Activated CD4-positive, alpha-beta memory T cell treated with anti-CD3 and anti-CD28 coated beads, Interleukin-2, amount 10 ng/mL, durations not matched to agents 7 days and 5 days (primary cell): ENCODE measurements at regions of chr20 and their contacts with region 1.

Region 1: DNA sequence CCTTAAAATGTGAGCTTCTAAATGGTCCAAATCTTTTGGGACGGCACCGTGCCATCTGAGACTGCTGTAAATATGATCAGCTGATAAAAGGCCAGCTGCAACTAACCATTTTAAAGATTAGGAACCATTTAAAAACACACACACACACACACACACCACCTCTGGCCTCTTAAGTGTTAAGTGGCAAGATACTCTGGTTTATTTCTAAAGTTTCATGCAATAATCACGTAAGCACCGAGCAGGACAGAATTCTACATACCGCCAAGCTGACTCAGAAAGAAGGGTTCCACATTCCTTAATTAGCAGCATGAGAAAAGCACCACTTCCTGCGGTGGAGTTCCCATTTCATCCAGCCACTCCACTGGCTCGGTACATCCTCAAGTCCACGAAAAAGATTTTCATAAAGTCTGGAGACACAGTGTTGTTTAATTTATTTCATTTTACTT is 17.8 kb upstream of the ZNF217 start:
- DNase-seq: no peak
- H3K4me3 Mint-ChIP-seq: no peak overlapping the region
- H3K27ac Mint-ChIP-seq: no peak overlapping the region
- H3K4me1 Mint-ChIP-seq: peaks cover 32% of the 10 kb centered on the region
- H3K27me3 Mint-ChIP-seq: no peaks in the 10 kb centered on the region

Region 2: DNA sequence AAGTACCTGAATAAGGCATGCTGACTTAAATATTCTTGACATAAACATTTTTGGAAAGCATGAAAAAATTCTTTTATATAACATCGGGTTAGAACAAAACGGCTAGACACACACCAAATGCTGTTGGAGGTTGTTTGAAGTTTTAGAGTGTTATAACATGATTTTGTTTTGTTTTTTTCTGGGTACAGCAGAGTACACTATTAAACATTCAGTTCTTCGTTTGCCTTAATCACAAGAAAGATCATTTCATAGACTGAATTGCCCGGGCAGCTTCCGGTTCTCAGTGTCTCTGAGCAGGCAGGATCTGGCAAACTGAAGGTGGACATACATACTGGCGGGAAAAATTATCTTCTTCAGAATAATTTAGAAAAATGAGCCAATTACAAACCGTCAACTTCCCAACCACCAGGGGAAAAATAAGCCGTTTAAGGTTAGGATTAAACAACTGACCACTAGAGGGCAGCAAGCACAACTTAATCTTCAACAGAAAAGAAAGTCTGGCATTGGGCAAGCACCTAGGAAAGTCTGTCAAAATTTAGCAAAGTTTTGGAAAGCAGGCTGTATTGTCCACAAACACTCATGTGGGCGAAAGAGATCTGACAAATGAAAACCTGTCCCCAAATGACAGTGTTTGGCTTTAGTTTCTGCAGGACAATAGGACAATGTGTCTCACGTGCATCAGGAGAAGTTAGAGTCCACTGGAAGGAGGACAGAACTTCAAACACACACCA is 32.8 kb before region 1 on chr20:
- CTCF ChIA-PET with region 1: interaction called, 5 read pairs
- POLR2A ChIA-PET with region 1: interaction called, 12 read pairs
- DNase-seq: peak; percentile 55
- H3K4me3 Mint-ChIP-seq: peak overlapping the region; percentile 78
- H3K27ac Mint-ChIP-seq: peak overlapping the region; percentile 80
- H3K4me1 Mint-ChIP-seq: peaks cover 92% of the 10 kb centered on the region
- H3K27me3 Mint-ChIP-seq: no peaks in the 10 kb centered on the region

Region 3: DNA sequence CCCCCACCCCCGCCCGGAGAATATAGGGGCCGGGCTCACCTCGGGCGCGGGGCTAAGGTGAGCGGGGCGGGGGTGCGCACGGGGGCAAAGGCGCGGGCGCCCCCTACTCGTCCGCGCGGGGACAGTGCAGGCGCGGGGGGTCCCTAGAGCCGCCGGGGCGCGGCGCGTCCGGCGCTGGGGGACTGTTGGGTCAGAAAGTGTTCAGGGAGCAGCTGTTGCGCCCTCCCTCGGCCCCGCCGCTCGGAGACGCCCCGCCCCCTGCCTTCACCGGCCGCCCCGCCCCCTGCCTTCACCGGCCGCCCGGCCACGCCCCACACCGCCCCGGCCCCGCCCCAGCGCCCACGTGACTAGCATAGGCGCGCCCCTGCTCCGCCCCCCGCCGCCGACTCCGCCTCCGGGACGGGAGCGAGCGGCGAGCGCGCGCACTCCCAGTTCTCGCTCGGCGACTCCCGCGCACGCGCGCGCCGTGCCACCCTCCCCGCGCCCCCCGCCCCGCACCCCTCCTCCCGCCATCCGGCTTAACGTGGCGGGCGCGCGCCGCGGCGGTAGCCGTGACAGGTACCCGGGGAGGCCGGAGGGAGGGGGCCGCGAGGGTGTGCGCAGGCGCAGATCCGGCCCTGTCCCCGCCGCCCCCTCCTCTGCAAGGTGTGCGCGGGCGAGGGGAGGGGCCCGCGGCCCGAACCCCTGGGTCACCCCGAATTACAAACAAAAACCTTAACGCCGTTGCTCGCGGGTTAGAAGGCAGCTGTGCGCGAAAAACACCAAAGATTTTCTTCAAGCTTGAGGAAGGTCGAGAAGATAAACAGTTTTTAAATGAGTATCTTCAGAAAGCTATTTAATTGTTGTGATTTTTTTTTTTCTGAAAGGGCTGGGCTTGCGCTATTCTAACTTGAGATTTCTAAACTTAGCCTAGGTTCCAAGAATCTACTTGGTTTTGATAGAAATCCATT is 17.1 kb before region 1 on chr20:
- CTCF ChIA-PET with region 1: interaction called, 13 read pairs
- POLR2A ChIA-PET with region 1: interaction called, 89 read pairs
- DNase-seq: peak; percentile 97
- H3K4me3 Mint-ChIP-seq: peak overlapping the region; percentile 99
- H3K27ac Mint-ChIP-seq: peak overlapping the region; percentile 95
- H3K4me1 Mint-ChIP-seq: peaks cover 44% of the 10 kb centered on the region
- H3K27me3 Mint-ChIP-seq: no peaks in the 10 kb centered on the region

Region 4: DNA sequence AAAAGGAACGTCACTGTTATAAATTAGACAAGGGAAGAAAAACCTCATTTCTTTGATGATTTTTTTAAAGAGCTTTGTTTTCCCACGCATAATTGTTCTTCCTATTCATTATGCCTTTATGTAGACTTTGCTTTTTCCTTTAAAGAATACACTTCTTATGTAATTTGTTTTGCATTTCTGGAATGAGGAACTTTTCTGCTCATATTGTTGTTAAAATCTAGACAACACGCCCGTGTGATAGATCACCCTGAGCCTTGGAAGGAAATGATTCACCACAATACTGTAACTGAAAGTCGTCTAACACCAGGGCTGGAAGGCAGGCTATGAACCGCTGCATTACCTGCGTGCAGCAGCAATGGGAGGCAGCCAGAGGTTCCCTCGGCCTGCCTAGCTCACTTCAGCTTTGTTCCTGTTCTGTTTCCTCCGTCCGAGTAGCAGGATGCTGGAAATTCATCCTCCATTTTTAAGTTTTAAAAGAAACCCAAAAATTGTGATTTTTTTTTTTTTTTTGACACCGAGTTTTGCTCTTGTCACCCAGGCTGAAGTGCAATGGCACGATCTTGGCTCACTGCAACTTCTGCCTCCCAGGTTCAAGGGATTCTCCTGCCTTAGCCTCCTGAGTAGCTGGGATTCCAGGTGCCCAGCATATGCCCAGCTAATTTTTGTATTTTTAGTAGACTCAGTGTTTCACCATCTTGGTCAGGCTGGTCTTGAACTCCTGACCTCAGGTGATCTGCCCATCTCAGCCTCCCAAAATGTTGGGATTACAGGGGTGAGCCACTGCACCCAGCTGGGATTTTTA is 31.8 kb after region 1 on chr20:
- CTCF ChIA-PET with region 1: interaction called, 6 read pairs
- POLR2A ChIA-PET with region 1: interaction called, 33 read pairs
- DNase-seq: peak; percentile 71
- H3K4me3 Mint-ChIP-seq: peak overlapping the region; percentile 57
- H3K27ac Mint-ChIP-seq: peak overlapping the region; percentile 90
- H3K4me1 Mint-ChIP-seq: peaks cover 33% of the 10 kb centered on the region
- H3K27me3 Mint-ChIP-seq: no peaks in the 10 kb centered on the region

Region 5: DNA sequence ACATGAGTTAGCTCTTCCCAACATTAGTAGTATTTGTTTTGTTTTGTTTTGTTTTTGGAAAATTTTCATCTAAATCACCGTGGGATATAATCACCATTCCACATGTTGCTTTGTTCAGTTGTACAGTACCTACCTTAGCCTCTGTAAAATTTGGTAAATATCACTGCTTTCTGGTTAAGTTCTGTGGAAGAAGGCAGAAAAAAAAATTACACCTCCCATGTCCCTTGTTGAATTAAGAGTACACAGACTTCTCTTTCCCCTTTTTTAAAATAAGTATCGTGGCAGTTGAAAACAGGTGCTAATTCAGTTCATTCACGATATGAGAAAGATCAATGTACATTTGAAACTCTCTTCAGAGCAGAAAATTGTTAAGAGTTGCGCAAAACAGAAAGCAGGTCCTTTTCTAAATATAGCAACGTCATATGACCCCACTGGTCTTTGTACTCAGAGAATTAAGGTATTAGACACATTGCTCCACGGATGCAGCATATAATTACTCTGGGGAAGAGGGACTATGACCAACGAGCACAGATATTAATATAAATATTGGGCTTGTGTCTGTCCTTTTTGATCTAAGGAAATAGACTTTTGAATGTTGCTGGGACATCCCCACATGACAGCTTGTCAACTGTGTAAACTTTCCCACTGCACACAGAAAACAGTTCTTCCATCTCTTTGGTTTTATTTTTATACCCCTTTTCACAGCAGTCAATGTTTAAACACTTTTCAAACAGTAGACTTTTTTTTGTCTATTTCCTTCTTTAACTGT is 40.8 kb after region 1 on chr20:
- CTCF ChIA-PET with region 1: interaction called, 4 read pairs
- POLR2A ChIA-PET with region 1: interaction called, 11 read pairs
- DNase-seq: no peak
- H3K4me3 Mint-ChIP-seq: peak overlapping the region; percentile 69
- H3K27ac Mint-ChIP-seq: peak overlapping the region; percentile 97
- H3K4me1 Mint-ChIP-seq: peaks cover 40% of the 10 kb centered on the region
- H3K27me3 Mint-ChIP-seq: no peaks in the 10 kb centered on the region

Region 6: GRCh38 chr20:53660078-53660909 is 48.8 kb after region 1 on chr20:
- CTCF ChIA-PET with region 1: interaction called, 4 read pairs
- POLR2A ChIA-PET with region 1: interaction called, 11 read pairs
- DNase-seq: peak; percentile 45
- H3K4me3 Mint-ChIP-seq: peak overlapping the region; percentile 77
- H3K27ac Mint-ChIP-seq: peak overlapping the region; percentile 84
- H3K4me1 Mint-ChIP-seq: peaks cover 54% of the 10 kb centered on the region
- H3K27me3 Mint-ChIP-seq: no peaks in the 10 kb centered on the region

Region 7: GRCh38 chr20:54070187-54070987 is 458.9 kb after region 1 on chr20 and contains the start of gene BCAS1:
- CTCF ChIA-PET with region 1: no interaction called
- POLR2A ChIA-PET with region 1: no interaction called
- DNase-seq: no peak
- H3K4me3 Mint-ChIP-seq: no peak within 1 kb of the TSS
- H3K27ac Mint-ChIP-seq: no peak within 1 kb of the TSS
- H3K4me1 Mint-ChIP-seq: peaks cover 16% of the 10 kb centered on the region
- H3K27me3 Mint-ChIP-seq: peaks cover 2% of the 10 kb centered on the region
- total RNA-seq, gene BCAS1: not detected